ENCODE measurements at regions of chr12 and their contacts with region 1.

Region 1: DNA sequence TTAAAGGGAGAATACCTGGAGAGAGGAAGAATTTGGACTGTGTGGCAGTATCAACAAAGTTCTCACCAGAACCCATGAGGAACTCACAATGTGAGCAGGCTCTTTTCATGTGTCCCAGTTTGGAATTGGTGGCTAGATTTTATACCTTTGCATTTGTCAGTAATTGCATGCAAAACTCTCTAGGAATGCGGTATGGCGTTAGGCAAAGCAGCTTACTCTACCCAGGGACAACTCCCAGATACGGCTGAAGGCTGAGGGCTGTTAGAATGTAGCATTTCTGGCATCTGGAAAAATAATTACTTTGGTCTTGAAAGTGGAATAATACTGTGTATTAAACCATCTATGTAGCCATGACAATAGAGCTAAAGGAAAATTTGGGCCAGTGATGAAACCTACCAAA is 635.5 kb downstream of the SLC16A7 start:
- DNase-seq: no peak
- H3K4me3 Mint-ChIP-seq: no peak overlapping the region
- H3K27ac Mint-ChIP-seq: no peak overlapping the region
- H3K4me1 Mint-ChIP-seq: no peaks in the 10 kb centered on the region
- H3K27me3 Mint-ChIP-seq: no peaks in the 10 kb centered on the region
- CTCF ChIP-seq: no peak

Region 2: DNA sequence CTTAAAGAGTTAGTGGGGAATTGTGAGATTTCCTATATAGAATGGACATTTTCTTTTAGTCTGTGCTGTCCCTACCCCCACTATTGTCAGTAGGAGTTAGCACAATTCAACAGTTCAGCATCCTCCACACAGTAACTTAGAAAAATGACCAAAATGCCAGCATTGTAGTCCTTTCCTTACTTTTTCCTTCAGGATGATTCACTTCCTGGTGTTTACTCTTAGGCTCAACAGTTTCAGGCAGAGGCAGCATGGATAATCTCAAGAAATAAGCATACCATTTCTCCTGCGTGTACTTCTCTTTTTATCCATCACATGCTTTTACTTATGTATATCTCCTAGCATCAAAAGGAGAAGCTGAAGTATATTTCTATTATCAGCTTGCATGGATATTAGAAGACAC is 47.9 kb after region 1 on chr12:
- CTCF ChIA-PET with region 1: no interaction called
- intact Hi-C with region 1: loop called (anchors 1 kb)
- DNase-seq: no peak
- H3K4me3 Mint-ChIP-seq: no peak overlapping the region
- H3K27ac Mint-ChIP-seq: no peak overlapping the region
- H3K4me1 Mint-ChIP-seq: no peaks in the 10 kb centered on the region
- H3K27me3 Mint-ChIP-seq: no peaks in the 10 kb centered on the region
- CTCF ChIP-seq: no peak

Region 3: GRCh38 chr12:60394665-60395064 is 163.4 kb after region 1 on chr12:
- CTCF ChIA-PET with region 1: no interaction called
- intact Hi-C with region 1: no loop called
- DNase-seq: no peak
- H3K4me3 Mint-ChIP-seq: no peak overlapping the region
- H3K27ac Mint-ChIP-seq: peak overlapping the region; percentile 22
- H3K4me1 Mint-ChIP-seq: peaks cover 14% of the 10 kb centered on the region
- H3K27me3 Mint-ChIP-seq: no peaks in the 10 kb centered on the region
- CTCF ChIP-seq: no peak

Measured in Calu3 (cell line).